ENCODE measurements at regions of chr1 and their contacts with region 1.

Region 1: DNA sequence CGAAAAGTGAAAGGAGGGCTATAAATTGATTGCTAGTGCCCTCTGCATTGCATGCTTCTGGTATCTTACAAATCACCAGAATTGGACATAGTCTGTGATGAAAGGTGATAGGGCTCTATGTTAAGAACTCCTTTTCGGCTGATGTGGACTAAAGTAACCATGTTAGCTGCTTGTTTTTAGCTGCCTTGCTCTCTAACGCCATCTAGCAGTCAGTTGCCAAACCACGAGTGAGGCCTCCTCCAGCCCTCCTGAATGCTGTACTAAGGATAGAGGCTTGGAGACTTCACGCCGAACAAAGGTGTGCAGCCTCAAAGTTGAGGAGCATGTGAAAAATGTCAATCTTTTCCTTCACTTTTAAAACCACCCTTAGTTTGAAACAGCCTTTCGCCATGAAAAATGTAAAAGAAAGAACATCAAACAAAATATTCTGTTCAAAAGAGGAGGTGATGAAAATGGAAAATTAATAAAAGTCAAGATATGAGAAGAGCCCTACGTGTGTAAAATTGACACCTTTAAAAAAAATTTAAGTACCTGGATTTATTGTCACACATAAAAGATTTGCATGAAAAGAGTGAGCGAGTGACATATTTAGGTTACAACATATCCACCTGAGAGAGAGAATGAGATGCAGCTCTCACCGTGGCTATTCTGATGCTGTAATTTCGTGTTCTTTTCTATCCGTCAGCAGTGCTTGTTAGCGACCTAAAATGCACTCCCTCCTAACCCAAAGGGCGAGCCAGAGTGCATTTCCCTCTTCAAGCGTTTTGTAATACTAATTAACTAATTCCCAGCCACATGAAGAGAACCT is 8.1 kb downstream of the LRRC53 start:
- DNase-seq: peak; percentile 19
- H3K4me3 ChIP-seq: no peak overlapping the region
- H3K27ac ChIP-seq: no peak overlapping the region
- H3K4me1 ChIP-seq: no peaks in the 10 kb centered on the region
- H3K27me3 ChIP-seq: no peaks in the 10 kb centered on the region
- CTCF ChIP-seq: peak; percentile 89 to 93

Region 2: DNA sequence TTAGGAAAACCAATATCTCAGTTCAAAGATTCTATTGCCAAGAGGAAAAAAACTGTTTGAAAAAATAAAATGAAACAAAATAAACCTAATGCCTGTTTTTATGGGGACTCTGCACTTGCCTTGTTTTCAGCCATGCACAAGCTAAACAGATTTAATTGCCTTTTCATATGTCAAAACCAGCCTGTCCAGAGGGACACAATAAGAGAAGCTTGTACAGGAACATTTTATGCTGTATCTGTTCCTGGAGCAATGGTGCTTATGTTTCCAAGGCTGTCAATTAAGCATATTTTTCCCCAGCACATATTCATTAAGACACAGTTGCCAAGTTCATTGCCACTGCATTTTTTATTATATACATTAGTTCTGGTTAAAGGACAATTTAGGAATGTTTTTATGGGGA is 777.3 kb before region 1 on chr1:
- CTCF ChIA-PET with region 1: no interaction called
- dilution Hi-C with region 1: no loop called
- in situ Hi-C with region 1: no loop called
- intact Hi-C with region 1: no loop called
- DNase-seq: no peak
- H3K4me3 ChIP-seq: no peak overlapping the region
- H3K27ac ChIP-seq: no peak overlapping the region
- H3K4me1 ChIP-seq: no peaks in the 10 kb centered on the region
- H3K27me3 ChIP-seq: no peaks in the 10 kb centered on the region
- CTCF ChIP-seq: no peak

Region 3: DNA sequence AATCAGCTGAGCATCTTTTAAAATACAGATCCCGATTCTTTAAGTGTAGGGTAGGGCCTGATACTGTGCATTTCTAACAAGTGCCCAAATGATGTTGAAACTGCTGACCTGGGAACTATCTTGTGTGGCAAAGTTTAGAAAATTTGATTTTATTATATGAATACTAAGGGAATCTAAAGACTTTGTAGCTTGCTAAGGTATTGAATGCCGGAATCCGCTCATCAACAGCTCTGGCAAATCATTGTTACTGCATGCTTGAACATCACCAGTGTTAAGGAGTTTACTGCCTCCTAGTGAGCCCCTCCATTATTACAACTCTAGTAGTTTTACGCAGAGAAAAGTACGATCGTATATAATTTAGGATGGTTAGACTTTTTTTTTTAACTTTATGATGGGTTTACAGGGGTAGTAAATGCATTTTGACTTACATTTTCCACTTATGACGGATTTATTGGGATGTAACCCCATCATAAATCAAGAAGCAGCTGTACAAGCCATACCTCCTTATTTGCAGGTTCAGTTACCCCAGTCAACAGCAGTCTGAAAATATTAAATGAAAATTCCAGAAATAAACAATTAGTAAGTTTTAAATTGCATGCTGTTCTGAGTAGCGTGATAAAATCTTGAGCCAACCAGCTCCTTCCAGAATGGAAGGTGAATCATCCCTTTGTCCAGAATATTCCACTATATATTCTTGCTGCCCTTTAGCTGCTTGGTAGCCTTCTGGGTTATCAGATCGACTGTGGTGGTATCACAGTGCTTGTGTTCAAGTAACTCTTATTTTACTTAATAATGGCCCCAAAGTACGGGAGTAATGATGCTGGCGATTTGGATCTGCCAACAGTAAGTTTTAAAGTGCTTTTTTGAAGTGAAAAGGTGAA is 229.5 kb after region 1 on chr1:
- CTCF ChIA-PET with region 1: interaction called, 10 read pairs
- dilution Hi-C with region 1: no loop called
- in situ Hi-C with region 1: no loop called
- intact Hi-C with region 1: no loop called
- DNase-seq: peak; percentile 57
- H3K4me3 ChIP-seq: peak overlapping the region; percentile 63 to 95 (median 87)
- H3K27ac ChIP-seq: peak overlapping the region; percentile 63
- H3K4me1 ChIP-seq: peaks cover 29% of the 10 kb centered on the region
- H3K27me3 ChIP-seq: no peaks in the 10 kb centered on the region
- CTCF ChIP-seq: peak; percentile 73 to 81

Measured in mammary epithelial cell (primary cell).